AG04449 (cell line): ENCODE measurements at regions of chr7 and their contacts with region 1.

Region 1: DNA sequence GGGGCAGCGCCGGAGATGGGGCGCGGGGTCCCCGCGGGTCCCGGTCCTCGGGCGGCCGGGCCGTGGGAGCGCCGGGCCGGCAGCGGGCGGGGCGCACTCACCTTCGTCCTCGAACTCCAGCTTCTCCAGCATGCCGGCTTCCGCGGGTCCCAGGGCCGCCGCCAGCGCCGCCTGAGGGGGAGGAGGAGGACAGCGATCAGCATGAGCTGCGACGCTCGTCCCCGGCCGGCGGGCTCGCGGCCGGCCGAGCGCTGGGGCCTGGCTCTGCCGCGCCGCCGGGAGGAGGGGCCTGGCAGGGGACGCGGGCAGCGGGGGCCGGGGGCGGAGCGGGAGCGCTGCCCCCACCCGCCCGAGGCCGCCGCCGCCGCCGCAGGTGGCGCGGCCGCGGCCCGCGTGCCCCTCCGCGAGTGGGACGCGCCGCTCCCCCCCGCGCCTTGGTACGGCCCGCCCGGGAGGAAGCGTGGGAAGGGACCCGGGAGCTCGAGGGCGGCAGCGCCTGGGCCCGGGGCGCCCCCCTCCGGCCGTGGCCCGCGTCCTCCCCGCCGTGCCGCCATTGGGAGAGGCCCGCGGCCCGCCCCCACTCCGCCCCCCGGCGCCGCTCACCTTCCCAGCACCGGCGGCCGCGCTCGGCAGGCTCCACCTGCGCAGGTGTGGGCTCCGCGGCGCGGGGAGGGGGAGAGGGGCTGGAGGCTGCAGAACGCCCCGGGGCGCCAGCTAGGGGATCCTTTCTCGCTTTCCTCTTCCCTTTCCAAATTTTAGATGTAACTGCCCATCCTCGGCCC is 112.5 kb upstream of the RHEB start:
- DNase-seq: no peak
- H3K4me3 ChIP-seq: peak overlapping the region; percentile 85
- CTCF ChIP-seq: peak; percentile 41

Region 2: GRCh38 chr7:150766334-150766709 is 865.8 kb before region 1 on chr7:
- CTCF ChIA-PET with region 1: no interaction called
- POLR2A ChIA-PET with region 1: no interaction called
- DNase-seq: no peak
- H3K4me3 ChIP-seq: no peak overlapping the region
- CTCF ChIP-seq: no peak

Region 3: GRCh38 chr7:151570366-151570915 is 61.7 kb before region 1 on chr7:
- CTCF ChIA-PET with region 1: interaction called, 32 read pairs
- POLR2A ChIA-PET with region 1: no interaction called
- DNase-seq: no peak
- H3K4me3 ChIP-seq: no peak overlapping the region
- CTCF ChIP-seq: peak; percentile 18

Region 4: GRCh38 chr7:151648429-151648828 is 16.3 kb after region 1 on chr7:
- CTCF ChIA-PET with region 1: interaction called, 89 read pairs
- POLR2A ChIA-PET with region 1: no interaction called
- DNase-seq: no peak
- H3K4me3 ChIP-seq: no peak overlapping the region
- CTCF ChIP-seq: no peak

Region 5: GRCh38 chr7:151705636-151706276 is 73.6 kb after region 1 on chr7:
- CTCF ChIA-PET with region 1: interaction called, 13 read pairs
- POLR2A ChIA-PET with region 1: no interaction called
- DNase-seq: no peak
- H3K4me3 ChIP-seq: no peak overlapping the region
- CTCF ChIP-seq: peak; percentile 67

Region 6: GRCh38 chr7:151754142-151754590 is 122.0 kb after region 1 on chr7:
- CTCF ChIA-PET with region 1: interaction called, 94 read pairs
- POLR2A ChIA-PET with region 1: no interaction called
- DNase-seq: peak; percentile 97
- H3K4me3 ChIP-seq: no peak overlapping the region
- CTCF ChIP-seq: peak; percentile 98